ENCODE measurements at regions of chr1 and their contacts with region 1.

Region 1: DNA sequence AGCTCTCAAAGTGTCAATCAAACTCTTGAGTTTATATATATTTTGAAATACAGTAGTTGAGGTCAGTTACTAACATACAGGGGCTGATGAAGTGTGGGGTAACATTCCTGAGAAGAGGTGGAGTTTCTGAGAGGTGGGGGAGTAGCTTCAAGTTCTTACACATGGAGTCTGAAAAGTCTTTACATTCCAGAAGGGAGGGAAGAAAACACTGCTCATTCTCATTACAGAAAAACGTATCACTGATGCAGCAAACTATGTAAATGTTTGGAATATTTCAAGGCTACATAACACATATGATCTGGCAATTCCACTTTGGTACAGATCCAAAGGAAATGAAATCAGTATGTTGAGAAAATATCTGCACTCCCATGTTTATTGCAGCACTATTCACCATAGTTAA is 1065.8 kb upstream of the B3GALT2 start:
- DNase-seq: no peak
- ATAC-seq: no peak
- H3K4me3 ChIP-seq: no peak overlapping the region
- H3K4me3 Mint-ChIP-seq: no peak overlapping the region
- H3K27ac ChIP-seq: no peak overlapping the region
- H3K27ac Mint-ChIP-seq: no peak overlapping the region
- H3K4me1 ChIP-seq: no peaks in the 10 kb centered on the region
- H3K4me1 Mint-ChIP-seq: peaks cover 0 to 5% (median 3%) of the 10 kb centered on the region in 3 donors
- H3K27me3 ChIP-seq: no peaks in the 10 kb centered on the region
- H3K27me3 Mint-ChIP-seq: no peaks in the 10 kb centered on the region

Region 2: GRCh38 chr1:193366764-193367507 is 885.3 kb before region 1 on chr1:
- CTCF ChIA-PET with region 1: interaction called in 1 of 2 experiments, 10 read pairs
- POLR2A ChIA-PET with region 1: no interaction called
- DNase-seq: no peak
- ATAC-seq: no peak
- H3K4me3 ChIP-seq: no peak overlapping the region
- H3K4me3 Mint-ChIP-seq: no peak overlapping the region
- H3K27ac ChIP-seq: no peak overlapping the region
- H3K27ac Mint-ChIP-seq: no peak overlapping the region
- H3K4me1 ChIP-seq: no peaks in the 10 kb centered on the region
- H3K4me1 Mint-ChIP-seq: peaks cover 17 to 20% (median 18%) of the 10 kb centered on the region in 3 donors
- H3K27me3 ChIP-seq: no peaks in the 10 kb centered on the region
- H3K27me3 Mint-ChIP-seq: no peaks in the 10 kb centered on the region

Region 3: DNA sequence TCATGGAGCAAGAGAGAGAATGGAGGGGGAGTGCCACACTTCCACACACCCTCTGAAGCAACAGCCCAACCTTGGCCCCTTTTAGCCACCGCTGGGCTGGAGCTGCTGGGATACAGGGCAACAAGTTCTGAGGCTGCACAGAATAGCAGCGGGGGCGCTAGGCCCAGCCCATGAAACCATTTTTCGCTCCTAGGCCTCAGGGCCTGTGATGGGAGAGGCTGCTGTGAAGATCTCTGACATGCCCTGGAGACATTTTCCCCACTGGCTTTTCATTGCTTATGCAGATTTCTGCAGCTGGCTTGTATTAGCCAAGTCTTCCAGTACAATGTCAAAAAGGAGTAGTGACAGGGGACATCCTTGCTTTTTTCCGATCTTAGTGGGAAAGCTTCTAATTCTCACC is 863.5 kb before region 1 on chr1:
- CTCF ChIA-PET with region 1: interaction called in 1 of 2 experiments, 10 read pairs
- POLR2A ChIA-PET with region 1: no interaction called
- DNase-seq: no peak
- ATAC-seq: no peak
- H3K4me3 ChIP-seq: no peak overlapping the region
- H3K4me3 Mint-ChIP-seq: no peak overlapping the region
- H3K27ac ChIP-seq: no peak overlapping the region
- H3K27ac Mint-ChIP-seq: no peak overlapping the region
- H3K4me1 ChIP-seq: no peaks in the 10 kb centered on the region
- H3K4me1 Mint-ChIP-seq: no peaks in the 10 kb centered on the region
- H3K27me3 ChIP-seq: no peaks in the 10 kb centered on the region
- H3K27me3 Mint-ChIP-seq: no peaks in the 10 kb centered on the region

Region 4: GRCh38 chr1:193951984-193952383 is 300.2 kb before region 1 on chr1:
- CTCF ChIA-PET with region 1: no interaction called
- POLR2A ChIA-PET with region 1: interaction called in 1 of 2 experiments, 10 read pairs
- DNase-seq: no peak
- ATAC-seq: no peak
- H3K4me3 ChIP-seq: no peak overlapping the region
- H3K4me3 Mint-ChIP-seq: no peak overlapping the region
- H3K27ac ChIP-seq: no peak overlapping the region
- H3K27ac Mint-ChIP-seq: no peak overlapping the region
- H3K4me1 ChIP-seq: no peaks in the 10 kb centered on the region
- H3K4me1 Mint-ChIP-seq: no peaks in the 10 kb centered on the region
- H3K27me3 ChIP-seq: no peaks in the 10 kb centered on the region
- H3K27me3 Mint-ChIP-seq: no peaks in the 10 kb centered on the region

Region 5: DNA sequence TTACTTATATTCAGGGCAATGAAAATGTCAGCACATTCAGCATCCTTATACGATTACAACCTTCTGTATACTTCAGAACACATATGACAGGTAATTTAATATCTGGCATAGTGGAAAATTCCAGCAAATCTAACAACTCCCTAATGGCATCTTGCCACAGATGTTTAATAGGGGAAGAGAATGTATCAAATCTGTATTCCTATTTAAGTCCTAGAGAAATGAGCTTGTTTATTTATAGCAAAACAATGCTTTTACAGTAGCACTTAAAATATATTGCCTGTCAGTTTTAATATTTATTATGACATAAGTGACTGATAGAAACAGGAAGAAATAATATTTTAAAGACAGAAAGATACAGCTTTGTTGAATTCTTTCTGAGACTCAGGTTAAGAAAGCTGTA is 36.0 kb after region 1 on chr1:
- CTCF ChIA-PET with region 1: no interaction called
- POLR2A ChIA-PET with region 1: no interaction called
- DNase-seq: no peak
- ATAC-seq: no peak
- H3K4me3 ChIP-seq: no peak overlapping the region
- H3K4me3 Mint-ChIP-seq: peak overlapping the region in 2 of 3 donors; percentile 50 to 54
- H3K27ac ChIP-seq: no peak overlapping the region
- H3K27ac Mint-ChIP-seq: no peak overlapping the region
- H3K4me1 ChIP-seq: peaks cover 7 to 21% of the 10 kb centered on the region in 2 experiments
- H3K4me1 Mint-ChIP-seq: peaks cover 19 to 38% (median 24%) of the 10 kb centered on the region in 3 donors
- H3K27me3 ChIP-seq: no peaks in the 10 kb centered on the region
- H3K27me3 Mint-ChIP-seq: no peaks in the 10 kb centered on the region

Region 6: DNA sequence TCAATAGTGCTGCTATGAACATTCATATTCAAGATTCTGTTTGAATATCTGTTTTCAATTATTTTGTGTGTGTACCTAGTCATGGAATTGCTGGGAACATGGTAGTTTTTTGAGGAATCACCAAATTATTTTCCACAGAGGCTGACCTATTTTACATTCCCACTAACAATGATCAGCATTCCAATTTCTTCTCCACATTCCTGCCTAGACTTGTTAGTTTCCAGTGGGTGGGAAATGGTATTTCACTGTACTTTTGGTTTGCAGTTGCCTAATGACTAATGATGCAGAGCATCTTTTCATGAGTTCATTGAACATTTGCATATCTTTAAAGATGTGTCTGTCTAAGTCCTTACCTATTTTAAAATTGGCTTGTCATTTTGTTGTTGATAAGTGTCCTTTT is 116.9 kb after region 1 on chr1:
- CTCF ChIA-PET with region 1: no interaction called
- POLR2A ChIA-PET with region 1: no interaction called
- DNase-seq: no peak
- ATAC-seq: no peak
- H3K4me3 ChIP-seq: no peak overlapping the region
- H3K4me3 Mint-ChIP-seq: no peak overlapping the region
- H3K27ac ChIP-seq: no peak overlapping the region
- H3K27ac Mint-ChIP-seq: no peak overlapping the region
- H3K4me1 ChIP-seq: no peaks in the 10 kb centered on the region
- H3K4me1 Mint-ChIP-seq: no peaks in the 10 kb centered on the region
- H3K27me3 ChIP-seq: no peaks in the 10 kb centered on the region
- H3K27me3 Mint-ChIP-seq: no peaks in the 10 kb centered on the region